Common myeloid progenitor, CD34-positive (primary cell): ENCODE measurements at regions of chr5 and their contacts with region 1.

Region 1: GRCh38 chr5:37722236-37723146 is 117.3 kb downstream of the GDNF start:
- DNase-seq: peak; percentile 20 to 70 (median 68)
- H3K4me3 ChIP-seq: no peak overlapping the region
- H3K27ac ChIP-seq: no peak overlapping the region
- H3K4me1 ChIP-seq: peaks cover 0 to 4% (median under 1%) of the 10 kb centered on the region in 4 experiments
- H3K27me3 ChIP-seq: no peaks in the 10 kb centered on the region

Region 2: DNA sequence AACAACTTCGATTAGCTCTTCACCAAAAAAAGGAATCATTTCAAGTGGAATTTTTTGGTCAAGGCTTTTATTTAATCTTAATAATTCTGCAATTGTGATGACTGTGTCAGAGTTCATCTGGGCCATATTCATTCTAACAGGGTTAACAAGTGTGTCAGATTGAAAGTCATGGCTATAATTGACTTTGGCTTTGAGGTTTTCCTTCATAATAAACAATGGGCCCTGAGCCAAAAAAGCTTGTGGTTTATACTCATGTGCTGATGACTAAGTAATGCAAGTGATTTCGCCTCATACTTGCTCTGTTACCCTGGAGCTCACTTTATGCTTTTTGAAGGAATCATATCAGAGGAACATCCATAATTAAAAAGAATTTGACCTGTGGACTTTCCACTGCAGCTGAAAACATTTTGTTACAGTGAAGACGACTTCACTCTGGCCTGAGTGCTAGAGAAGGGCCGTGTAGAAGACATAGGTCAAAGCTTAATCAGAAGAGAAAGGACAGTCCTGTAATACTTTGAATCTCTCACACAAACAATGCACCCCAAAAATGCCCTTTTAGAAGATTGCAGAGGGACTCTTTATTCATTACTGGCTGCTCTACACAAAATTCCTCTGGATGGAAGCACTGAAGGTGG is 15.7 kb after region 1 on chr5:
- CTCF ChIA-PET with region 1: interaction called, 14 read pairs
- POLR2A ChIA-PET with region 1: no interaction called
- DNase-seq: peak; percentile 86 to 96 (median 95)
- H3K4me3 ChIP-seq: no peak overlapping the region
- H3K27ac ChIP-seq: no peak overlapping the region
- H3K4me1 ChIP-seq: peaks cover 10 to 14% (median 13%) of the 10 kb centered on the region in 4 experiments
- H3K27me3 ChIP-seq: no peaks in the 10 kb centered on the region